Activated CD8-positive, alpha-beta T cell treated with anti-CD3 and anti-CD28 coated beads for 36 hours (primary cell): ENCODE measurements at regions of chr14 and their contacts with region 1.

Region 1: GRCh38 chr14:98210045-98210672 is 1061.8 kb downstream of the BCL11B start:
- DNase-seq: peak; percentile 81
- ATAC-seq: peak; percentile 72
- H3K4me3 Mint-ChIP-seq: peak overlapping the region; percentile 74
- H3K27ac Mint-ChIP-seq: peak overlapping the region; percentile 94
- H3K4me1 Mint-ChIP-seq: peaks cover 83% of the 10 kb centered on the region
- H3K27me3 Mint-ChIP-seq: no peaks in the 10 kb centered on the region
- CTCF ChIP-seq: no peak

Region 2: DNA sequence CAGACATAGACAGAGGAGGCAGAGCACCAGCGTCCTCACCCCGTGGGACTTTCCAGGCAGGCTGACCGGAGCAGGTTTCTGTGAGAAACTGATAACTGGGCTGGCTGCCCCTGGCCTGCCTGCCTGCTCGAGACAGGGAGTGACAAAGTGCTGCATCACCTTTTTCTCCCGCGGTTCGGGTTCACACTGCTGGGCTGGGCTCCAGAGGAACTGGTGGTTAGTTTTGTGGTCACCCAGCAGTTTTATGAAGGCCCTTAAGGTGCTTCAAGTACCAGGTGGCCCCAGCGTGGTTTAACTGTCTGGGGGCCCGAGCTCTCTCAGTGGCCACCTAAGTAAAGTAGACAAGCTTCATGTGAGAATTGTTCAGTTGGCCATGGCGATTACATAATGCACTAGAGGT is 11.8 kb before region 1 on chr14:
- CTCF ChIA-PET with region 1: interaction called, 4 read pairs
- POLR2A ChIA-PET with region 1: interaction called, 11 read pairs
- intact Hi-C with region 1: no loop called
- DNase-seq: peak; percentile 71
- ATAC-seq: peak; percentile 48
- H3K4me3 Mint-ChIP-seq: peak overlapping the region; percentile 6
- H3K27ac Mint-ChIP-seq: peak overlapping the region; percentile 76
- H3K4me1 Mint-ChIP-seq: peaks cover 84% of the 10 kb centered on the region
- H3K27me3 Mint-ChIP-seq: no peaks in the 10 kb centered on the region
- CTCF ChIP-seq: no peak